ENCODE measurements at regions of chr6 and their contacts with region 1.

Region 1: GRCh38 chr6:37141281-37142049 is 28.5 kb upstream of the PIM1 start:
- DNase-seq: no peak
- ATAC-seq: no peak
- H3K4me3 Mint-ChIP-seq: no peak overlapping the region
- H3K27ac Mint-ChIP-seq: peak overlapping the region; percentile 62
- H3K4me1 Mint-ChIP-seq: peaks cover 51% of the 10 kb centered on the region
- H3K27me3 Mint-ChIP-seq: no peaks in the 10 kb centered on the region
- CTCF ChIP-seq: no peak

Region 2: DNA sequence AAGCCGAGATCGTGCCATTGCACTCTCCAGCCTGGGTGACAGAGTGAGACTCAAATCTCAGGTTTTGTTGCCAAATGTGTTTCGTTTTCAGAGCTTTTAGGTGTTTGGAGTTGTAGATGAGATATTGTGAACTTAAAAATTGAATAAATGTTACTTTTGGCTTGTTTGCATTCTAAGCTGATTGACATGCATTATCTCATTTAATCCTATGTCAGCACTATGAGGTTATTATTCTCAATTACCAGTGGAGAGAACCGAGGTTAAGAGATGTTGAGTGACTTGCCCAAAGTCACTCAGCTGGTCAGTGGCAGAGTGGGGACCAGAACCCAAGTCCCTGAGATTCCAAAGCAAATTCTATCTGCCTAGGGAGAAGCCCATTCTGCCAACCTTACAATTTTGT is 44.1 kb before region 1 on chr6:
- CTCF ChIA-PET with region 1: no interaction called
- POLR2A ChIA-PET with region 1: interaction called, 12 read pairs
- intact Hi-C with region 1: loop called (anchors 5 kb)
- DNase-seq: no peak
- ATAC-seq: no peak
- H3K4me3 Mint-ChIP-seq: no peak overlapping the region
- H3K27ac Mint-ChIP-seq: no peak overlapping the region
- H3K4me1 Mint-ChIP-seq: peaks cover 18% of the 10 kb centered on the region
- H3K27me3 Mint-ChIP-seq: no peaks in the 10 kb centered on the region
- CTCF ChIP-seq: no peak

Region 3: GRCh38 chr6:37131104-37131959 is 10.1 kb before region 1 on chr6:
- CTCF ChIA-PET with region 1: interaction called, 4 read pairs
- POLR2A ChIA-PET with region 1: interaction called, 18 read pairs
- intact Hi-C with region 1: no loop called
- DNase-seq: no peak
- ATAC-seq: no peak
- H3K4me3 Mint-ChIP-seq: no peak overlapping the region
- H3K27ac Mint-ChIP-seq: no peak overlapping the region
- H3K4me1 Mint-ChIP-seq: peaks cover 12% of the 10 kb centered on the region
- H3K27me3 Mint-ChIP-seq: no peaks in the 10 kb centered on the region
- CTCF ChIP-seq: no peak

Region 4: GRCh38 chr6:37155394-37156312 is 14.2 kb after region 1 on chr6:
- CTCF ChIA-PET with region 1: no interaction called
- POLR2A ChIA-PET with region 1: interaction called, 20 read pairs
- intact Hi-C with region 1: loop called (anchors 1 kb)
- DNase-seq: peak; percentile 66
- ATAC-seq: peak; percentile 85
- H3K4me3 Mint-ChIP-seq: peak overlapping the region; percentile 59
- H3K27ac Mint-ChIP-seq: peak overlapping the region; percentile 97
- H3K4me1 Mint-ChIP-seq: peaks cover 65% of the 10 kb centered on the region
- H3K27me3 Mint-ChIP-seq: no peaks in the 10 kb centered on the region
- CTCF ChIP-seq: no peak

Region 5: DNA sequence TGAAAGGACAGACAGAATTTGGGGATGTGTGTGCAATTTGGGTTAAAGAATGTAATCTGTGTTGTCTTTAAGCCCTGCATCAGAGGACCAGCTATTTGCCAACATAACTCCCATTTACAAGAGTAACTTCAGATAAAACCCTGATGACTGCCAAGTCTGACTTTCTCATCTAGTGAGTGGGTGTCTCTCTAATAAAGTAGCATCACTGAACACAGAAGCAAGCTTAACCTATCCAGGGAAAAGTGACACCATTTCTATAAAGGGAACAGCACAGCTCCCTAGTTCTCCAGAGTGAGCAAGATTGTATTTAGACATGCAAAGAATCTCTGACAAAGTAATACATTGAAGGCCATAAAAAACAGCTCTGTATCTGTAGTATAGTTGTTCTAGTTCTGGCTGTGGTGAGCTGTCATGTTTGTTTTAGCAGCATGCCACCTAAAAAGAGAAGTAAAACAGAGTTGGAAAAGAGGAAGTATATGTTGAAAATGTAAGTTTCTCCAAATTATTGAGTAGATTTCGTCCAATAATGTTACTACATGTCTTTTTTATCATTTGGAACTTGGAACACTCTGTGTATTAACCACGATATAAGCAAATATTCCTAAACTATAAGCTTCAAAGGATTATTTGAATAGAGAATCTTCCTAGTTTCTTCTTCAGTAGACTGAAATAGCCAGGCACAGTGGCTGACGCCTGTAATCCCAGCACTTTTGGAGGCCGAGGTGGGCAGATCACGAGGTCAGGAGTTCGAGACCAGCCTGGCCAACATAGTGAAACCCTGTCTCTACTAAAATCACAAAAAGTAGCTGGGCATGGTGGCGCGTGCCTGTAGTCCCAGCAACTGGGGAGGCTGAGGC is 19.7 kb after region 1 on chr6:
- CTCF ChIA-PET with region 1: no interaction called
- POLR2A ChIA-PET with region 1: interaction called, 20 read pairs
- intact Hi-C with region 1: no loop called
- DNase-seq: no peak
- ATAC-seq: peak; percentile 83
- H3K4me3 Mint-ChIP-seq: peak overlapping the region; percentile 50
- H3K27ac Mint-ChIP-seq: peak overlapping the region; percentile 90
- H3K4me1 Mint-ChIP-seq: peaks cover 40% of the 10 kb centered on the region
- H3K27me3 Mint-ChIP-seq: no peaks in the 10 kb centered on the region
- CTCF ChIP-seq: no peak

Region 6: DNA sequence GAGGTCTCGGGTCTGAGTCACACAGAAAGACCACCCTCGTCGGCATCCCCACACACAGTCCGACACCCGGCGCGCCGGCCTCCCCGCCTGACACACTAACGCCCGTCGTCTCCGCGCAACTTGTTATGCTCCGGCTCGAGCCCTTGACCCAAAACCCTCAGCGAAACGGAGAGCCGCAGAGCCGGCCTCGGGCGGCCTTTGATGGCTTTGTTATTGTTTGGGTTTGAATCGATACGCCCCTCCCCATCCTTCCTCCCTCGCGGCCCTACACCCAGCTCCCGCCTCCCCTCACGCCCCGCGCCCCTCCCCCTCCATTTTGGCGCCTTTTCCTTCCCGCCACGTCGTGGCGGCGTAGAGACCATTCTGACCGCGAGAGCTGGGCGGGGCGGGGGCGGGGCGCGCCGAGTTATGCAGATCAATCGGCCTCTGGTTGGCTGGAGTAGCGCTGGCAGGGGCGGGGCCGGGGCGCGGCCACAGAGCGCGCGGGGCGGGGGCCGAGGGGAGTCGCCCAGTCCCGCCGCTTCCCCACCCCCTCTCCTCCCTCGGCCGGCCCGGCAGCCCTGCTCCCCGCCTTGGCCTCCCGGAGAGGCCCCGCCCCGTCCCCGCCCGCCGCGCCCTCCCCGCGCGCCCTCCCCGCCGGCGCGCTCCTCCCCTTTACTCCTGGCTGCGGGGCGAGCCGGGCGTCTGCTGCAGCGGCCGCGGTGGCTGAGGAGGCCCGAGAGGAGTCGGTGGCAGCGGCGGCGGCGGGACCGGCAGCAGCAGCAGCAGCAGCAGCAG is 28.2 kb after region 1 on chr6 and contains the start of gene PIM1:
- CTCF ChIA-PET with region 1: no interaction called
- POLR2A ChIA-PET with region 1: interaction called, 55 read pairs
- intact Hi-C with region 1: loop called (anchors 1 kb)
- DNase-seq: peak; percentile 88
- ATAC-seq: peak; percentile 84
- H3K4me3 Mint-ChIP-seq: peak within 1 kb of the TSS; percentile 95
- H3K27ac Mint-ChIP-seq: peak within 1 kb of the TSS; percentile 96
- H3K4me1 Mint-ChIP-seq: peaks cover 47% of the 10 kb centered on the region
- H3K27me3 Mint-ChIP-seq: no peaks in the 10 kb centered on the region
- CTCF ChIP-seq: no peak
- total RNA-seq, gene PIM1: 272 and 283 TPM in 2 replicates

Region 7: DNA sequence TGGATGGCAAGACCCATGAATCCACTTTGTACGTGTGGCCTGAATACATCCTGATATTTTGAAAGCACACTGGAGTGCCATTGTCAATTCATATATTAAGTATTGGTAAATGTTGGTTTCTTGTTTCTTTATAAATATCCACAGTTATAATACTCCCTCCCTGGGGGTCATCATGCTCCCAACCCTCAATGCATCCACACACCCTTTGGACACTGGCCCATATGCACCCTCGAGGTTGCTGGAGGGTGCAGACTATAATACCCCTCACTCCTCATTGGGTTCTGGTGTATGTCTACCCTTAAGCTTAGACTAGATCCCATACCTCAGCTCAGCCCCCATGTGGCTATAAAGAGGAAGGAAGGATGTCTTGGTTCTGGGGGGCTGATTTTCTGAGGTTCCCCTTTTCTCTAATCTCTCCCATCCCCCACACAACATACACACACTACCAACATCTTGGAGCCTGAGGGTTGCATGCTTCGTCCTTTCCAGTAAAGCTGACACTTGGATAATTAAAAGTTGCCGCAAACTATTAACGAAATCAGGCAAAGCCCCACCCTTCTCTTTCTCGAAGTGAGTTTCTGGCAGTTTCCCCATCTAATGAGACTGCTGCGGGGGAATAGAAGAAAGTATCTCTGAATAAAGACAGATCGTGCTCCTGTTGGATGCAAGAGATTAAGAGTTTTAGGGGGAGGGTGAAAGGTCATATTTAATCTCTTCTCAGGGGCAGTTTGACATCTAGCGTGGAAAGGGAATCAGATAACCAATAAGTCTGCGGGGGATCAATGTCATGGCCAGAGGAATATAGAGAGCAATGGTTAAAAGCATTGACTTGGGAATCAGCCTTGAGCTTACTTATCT is 35.8 kb after region 1 on chr6:
- CTCF ChIA-PET with region 1: no interaction called
- POLR2A ChIA-PET with region 1: interaction called, 55 read pairs
- intact Hi-C with region 1: no loop called
- DNase-seq: no peak
- ATAC-seq: peak; percentile 37
- H3K4me3 Mint-ChIP-seq: peak overlapping the region; percentile 65
- H3K27ac Mint-ChIP-seq: peak overlapping the region; percentile 90
- H3K4me1 Mint-ChIP-seq: peaks cover 62% of the 10 kb centered on the region
- H3K27me3 Mint-ChIP-seq: no peaks in the 10 kb centered on the region
- CTCF ChIP-seq: no peak